Psoas muscle (tissue), 8 donors: ENCODE measurements at regions of chr1 and their contacts with region 1.

Region 1: DNA sequence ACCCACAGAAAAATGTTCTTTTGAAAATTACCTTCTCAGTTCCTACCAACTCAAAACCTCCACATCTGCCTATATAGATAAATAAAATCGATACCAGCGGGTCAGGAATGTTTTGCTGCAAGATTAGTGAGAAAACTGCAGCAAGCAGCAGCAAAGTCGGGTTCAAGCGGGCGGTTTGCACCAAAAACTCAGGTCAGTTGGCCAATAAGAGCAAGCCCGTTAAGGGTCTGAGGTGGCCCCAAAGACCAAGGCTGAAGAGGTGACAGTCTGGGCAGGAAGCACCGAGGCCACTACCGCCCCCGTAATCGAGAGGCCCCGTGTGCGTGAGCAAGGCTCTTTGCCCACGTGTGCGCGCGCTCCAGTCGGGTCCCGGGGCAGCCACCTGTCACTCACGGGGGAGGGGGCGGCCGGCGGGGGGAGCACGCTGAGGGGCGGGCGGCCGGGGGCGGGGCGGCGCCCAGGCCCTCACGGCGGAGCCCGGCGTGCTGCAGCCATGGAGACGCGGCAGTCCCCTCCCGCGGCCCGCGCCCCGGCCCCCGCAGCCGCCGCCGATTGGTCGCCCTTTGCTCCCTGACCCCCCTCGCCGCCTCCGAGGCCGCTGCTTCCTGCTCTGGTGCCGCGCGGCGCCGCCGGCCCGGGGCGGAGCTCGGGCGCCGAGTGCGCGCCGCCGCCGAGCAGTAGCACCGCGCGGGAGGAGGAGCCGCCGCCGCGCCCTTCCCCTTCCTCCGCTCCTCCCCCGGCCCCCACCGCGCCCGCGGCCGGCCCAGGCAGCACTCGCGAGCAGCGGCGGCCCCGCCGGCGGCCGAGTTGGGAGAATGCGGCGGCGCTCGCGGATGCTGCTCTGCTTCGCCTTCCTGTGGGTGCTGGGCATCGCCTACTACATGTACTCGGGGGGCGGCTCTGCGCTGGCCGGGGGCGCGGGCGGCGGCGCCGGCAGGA is at the start of gene GALNT2:
- DNase-seq: peak; percentile 91 to 94
- ATAC-seq: peak; percentile 81 to 89 (median 86)
- H3K4me3 ChIP-seq: peak within 1 kb of the TSS; percentile 95
- H3K27ac ChIP-seq: peak within 1 kb of the TSS; percentile 89
- H3K4me1 ChIP-seq: peaks cover 37% of the 10 kb centered on the region
- H3K27me3 ChIP-seq: no peaks in the 10 kb centered on the region
- CTCF ChIP-seq: no peak
- total RNA-seq, gene GALNT2: 49.4 to 88.7 (median 79.6) TPM

Region 2: GRCh38 chr1:229661022-229661877 is 405.5 kb before region 1 on chr1:
- intact Hi-C with region 1: loop called (anchors 5 to 10 kb)
- DNase-seq: peak; percentile 79 to 86
- ATAC-seq: peak; percentile 88 to 96 (median 94)
- H3K4me3 ChIP-seq: no peak overlapping the region
- H3K27ac ChIP-seq: no peak overlapping the region
- H3K4me1 ChIP-seq: no peaks in the 10 kb centered on the region
- H3K27me3 ChIP-seq: no peaks in the 10 kb centered on the region
- CTCF ChIP-seq: peak; percentile 87

Region 3: DNA sequence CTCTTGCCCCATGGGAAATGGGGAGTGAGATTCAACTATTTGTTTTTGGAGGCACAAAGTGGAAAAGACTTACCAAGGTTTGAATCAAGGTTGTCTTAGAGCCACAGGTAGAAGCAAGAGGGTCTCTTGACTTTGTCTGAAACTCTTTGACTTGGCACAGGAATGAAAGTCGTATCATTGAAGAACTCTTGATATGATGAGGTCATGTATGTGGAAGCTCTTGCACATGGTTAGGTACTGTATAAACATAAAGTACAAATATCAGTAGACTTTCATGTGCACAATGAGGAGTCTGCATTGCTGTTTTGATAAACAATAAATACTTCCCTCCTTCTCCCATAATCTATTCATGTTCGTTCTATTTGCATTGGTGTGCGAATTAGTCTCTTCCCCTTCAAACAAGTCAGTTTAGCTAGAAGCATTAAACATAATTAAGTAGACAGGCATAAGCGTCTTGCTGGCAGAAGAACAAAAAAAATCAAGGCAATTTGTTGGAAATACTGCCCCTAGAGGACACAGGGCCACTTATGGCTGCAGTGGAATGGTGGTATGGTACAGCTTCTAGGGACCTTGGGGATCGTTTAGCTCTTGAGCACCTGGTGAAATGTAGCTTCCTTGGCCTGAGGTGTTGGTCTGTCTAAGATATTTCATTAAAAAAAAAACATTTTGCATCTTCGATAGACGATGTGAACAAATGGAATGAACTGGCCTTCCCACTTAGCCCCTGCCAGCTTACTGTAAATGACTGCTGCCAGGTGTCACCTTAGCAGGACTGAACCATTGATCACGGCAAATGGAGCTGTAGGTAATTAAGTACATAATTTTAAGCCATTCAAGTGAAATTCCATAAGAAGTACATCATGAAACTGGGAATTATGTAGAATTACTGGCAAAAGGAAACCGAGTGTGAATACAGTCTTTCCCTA is 217.7 kb before region 1 on chr1:
- intact Hi-C with region 1: loop called (anchors 2 to 10 kb)
- DNase-seq: no peak
- ATAC-seq: no peak
- H3K4me3 ChIP-seq: no peak overlapping the region
- H3K27ac ChIP-seq: no peak overlapping the region
- H3K4me1 ChIP-seq: peaks cover 13% of the 10 kb centered on the region
- H3K27me3 ChIP-seq: no peaks in the 10 kb centered on the region
- CTCF ChIP-seq: peak; percentile 39

Region 4: GRCh38 chr1:229887043-229887822 is 179.5 kb before region 1 on chr1:
- intact Hi-C with region 1: loop called in 1 of 2 experiments (anchors 2 kb)
- DNase-seq: no peak
- ATAC-seq: peak; percentile 86 to 88 (median 86)
- H3K4me3 ChIP-seq: no peak overlapping the region
- H3K27ac ChIP-seq: peak overlapping the region; percentile 98
- H3K4me1 ChIP-seq: peaks cover 36% of the 10 kb centered on the region
- H3K27me3 ChIP-seq: no peaks in the 10 kb centered on the region
- CTCF ChIP-seq: no peak

Region 5: GRCh38 chr1:230215031-230215430 is 148.3 kb after region 1 on chr1:
- intact Hi-C with region 1: loop called in 1 of 2 experiments (anchors 5 kb)
- DNase-seq: peak; percentile 59 to 79
- ATAC-seq: peak; percentile 73 to 87 (median 78)
- H3K4me3 ChIP-seq: peak overlapping the region; percentile 13
- H3K27ac ChIP-seq: peak overlapping the region; percentile 71
- H3K4me1 ChIP-seq: peaks cover 64% of the 10 kb centered on the region
- H3K27me3 ChIP-seq: no peaks in the 10 kb centered on the region
- CTCF ChIP-seq: peak; percentile 69